Astrocyte of the cerebellum (primary cell): ENCODE measurements at regions of chr1 and their contacts with region 1.

Region 1: GRCh38 chr1:21721295-21721985 is 52.3 kb upstream of the RAP1GAP start:
- DNase-seq: no peak
- H3K4me3 ChIP-seq: no peak overlapping the region
- CTCF ChIP-seq: no peak

Region 2: GRCh38 chr1:21963477-21964217 is 242.2 kb after region 1 on chr1:
- in situ Hi-C with region 1: loop called (anchors 10 kb)
- DNase-seq: peak; percentile 24
- H3K4me3 ChIP-seq: no peak overlapping the region
- CTCF ChIP-seq: peak; percentile 90